HEK293 (cell line): ENCODE measurements at regions of chr13 and their contacts with region 1.

Region 1: DNA sequence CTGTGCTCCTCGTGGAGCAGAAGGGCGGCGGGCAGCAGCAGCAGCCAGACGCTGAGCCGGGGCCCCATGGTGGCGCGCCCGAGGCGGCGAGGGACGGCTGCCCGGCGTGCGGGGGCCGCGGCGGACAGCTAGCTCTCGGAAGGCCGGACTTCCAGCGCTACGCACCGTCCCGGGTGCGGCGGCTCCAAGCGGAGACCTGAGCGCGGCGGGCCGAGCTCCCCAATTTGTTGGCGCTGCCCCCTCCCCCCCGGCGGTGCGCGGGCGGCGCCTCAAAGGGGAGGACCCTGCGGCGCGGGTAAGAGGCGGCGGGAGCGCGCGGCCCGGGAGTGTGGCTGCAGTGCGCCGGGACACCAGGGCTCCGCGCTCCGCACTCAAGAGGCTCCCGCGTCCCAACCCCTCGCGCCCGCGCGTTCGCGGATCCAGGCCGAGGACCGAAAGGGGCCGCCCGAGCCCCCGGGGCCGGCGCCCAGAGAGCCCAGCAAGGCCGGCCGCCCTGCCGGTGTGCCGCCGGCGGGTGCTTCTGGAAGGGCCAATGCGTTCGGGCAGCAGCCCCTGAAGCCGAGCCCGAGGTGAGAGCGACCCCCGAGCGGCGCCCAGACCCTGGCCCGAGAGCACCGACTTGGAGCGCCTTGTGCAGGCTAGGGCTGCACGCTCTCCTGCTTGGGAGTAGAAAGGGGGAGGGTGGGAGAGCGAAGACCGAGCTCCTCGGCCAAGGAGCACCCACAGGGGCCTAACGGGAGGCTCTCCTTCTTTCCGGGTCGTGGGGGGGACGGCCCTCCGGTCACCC is at the starts of genes COL4A1 and COL4A2:
- H3K4me3 ChIP-seq: peak within 1 kb of the TSS; percentile 70
- H3K27ac ChIP-seq: peak within 1 kb of the TSS; percentile 81; the same call in 1 of the 2 replicates
- H3K4me1 ChIP-seq: no peaks in the 10 kb centered on the region
- CTCF ChIP-seq: no peak

Region 2: GRCh38 chr13:110347535-110348308 is 40.6 kb after region 1 on chr13:
- CTCF ChIA-PET with region 1: no interaction called
- POLR2A ChIA-PET with region 1: interaction called, 18 read pairs
- H3K4me3 ChIP-seq: no peak overlapping the region
- H3K27ac ChIP-seq: no peak overlapping the region
- H3K4me1 ChIP-seq: no peaks in the 10 kb centered on the region
- CTCF ChIP-seq: no peak